MCF 10A (cell line): ENCODE measurements at regions of chr20 and their contacts with region 1.

Region 1: DNA sequence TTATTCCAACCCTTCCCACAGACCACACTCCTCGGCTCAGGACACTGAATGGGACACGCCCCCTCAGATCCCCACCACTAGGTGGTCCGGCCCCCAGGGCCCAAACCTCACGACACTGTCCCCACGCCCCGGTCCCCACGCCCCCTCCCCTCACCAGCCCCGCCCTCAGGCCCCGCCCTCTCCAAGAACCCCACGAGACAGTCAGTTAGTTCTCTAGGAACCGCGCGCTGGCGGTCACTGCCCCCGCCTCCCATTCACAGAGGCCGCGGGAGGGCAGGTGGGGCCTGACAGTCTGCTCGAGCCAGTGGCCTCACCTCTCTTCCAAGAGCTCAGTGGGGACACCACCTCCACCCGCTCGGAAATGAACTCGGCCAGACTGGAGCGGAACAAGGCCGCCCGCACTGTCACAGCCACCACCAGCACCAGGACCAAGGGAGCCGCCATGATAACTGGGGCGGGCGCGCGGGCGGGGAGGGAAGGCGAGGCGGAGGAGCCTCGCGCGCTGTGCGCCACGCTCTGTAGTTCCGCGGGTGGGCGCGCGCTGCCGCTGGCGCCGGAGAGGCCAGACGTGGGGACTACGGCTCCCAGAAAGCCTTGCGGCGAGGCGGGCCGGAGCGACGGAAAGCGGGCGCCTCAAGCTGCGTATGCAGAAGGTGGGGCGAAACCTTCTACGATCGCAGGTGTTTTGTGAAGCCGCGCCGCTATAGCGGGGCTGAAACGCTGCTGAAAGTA is at the start of gene PIGU:
- DNase-seq: peak; percentile 94
- H3K4me3 Mint-ChIP-seq: peak within 1 kb of the TSS; percentile 90
- H3K27ac Mint-ChIP-seq: peak within 1 kb of the TSS; percentile 95
- H3K4me1 Mint-ChIP-seq: peaks cover 6% of the 10 kb centered on the region
- H3K27me3 Mint-ChIP-seq: no peaks in the 10 kb centered on the region
- CTCF ChIP-seq: no peak
- total RNA-seq, gene PIGU: 14.2 and 14.5 TPM in 2 replicates

Region 2: GRCh38 chr20:34189572-34190163 is 487.1 kb before region 1 on chr20:
- CTCF ChIA-PET with region 1: no interaction called
- POLR2A ChIA-PET with region 1: no interaction called
- intact Hi-C with region 1: no loop called
- DNase-seq: no peak
- H3K4me3 Mint-ChIP-seq: no peak overlapping the region
- H3K27ac Mint-ChIP-seq: no peak overlapping the region
- H3K4me1 Mint-ChIP-seq: no peaks in the 10 kb centered on the region
- H3K27me3 Mint-ChIP-seq: peaks cover 39% of the 10 kb centered on the region
- CTCF ChIP-seq: no peak

Region 3: GRCh38 chr20:34689486-34689885 is 12.7 kb after region 1 on chr20:
- CTCF ChIA-PET with region 1: interaction called, 3 read pairs
- POLR2A ChIA-PET with region 1: interaction called, 12 read pairs
- intact Hi-C with region 1: no loop called
- DNase-seq: no peak
- H3K4me3 Mint-ChIP-seq: no peak overlapping the region
- H3K27ac Mint-ChIP-seq: no peak overlapping the region
- H3K4me1 Mint-ChIP-seq: no peaks in the 10 kb centered on the region
- H3K27me3 Mint-ChIP-seq: no peaks in the 10 kb centered on the region
- CTCF ChIP-seq: no peak

Region 4: DNA sequence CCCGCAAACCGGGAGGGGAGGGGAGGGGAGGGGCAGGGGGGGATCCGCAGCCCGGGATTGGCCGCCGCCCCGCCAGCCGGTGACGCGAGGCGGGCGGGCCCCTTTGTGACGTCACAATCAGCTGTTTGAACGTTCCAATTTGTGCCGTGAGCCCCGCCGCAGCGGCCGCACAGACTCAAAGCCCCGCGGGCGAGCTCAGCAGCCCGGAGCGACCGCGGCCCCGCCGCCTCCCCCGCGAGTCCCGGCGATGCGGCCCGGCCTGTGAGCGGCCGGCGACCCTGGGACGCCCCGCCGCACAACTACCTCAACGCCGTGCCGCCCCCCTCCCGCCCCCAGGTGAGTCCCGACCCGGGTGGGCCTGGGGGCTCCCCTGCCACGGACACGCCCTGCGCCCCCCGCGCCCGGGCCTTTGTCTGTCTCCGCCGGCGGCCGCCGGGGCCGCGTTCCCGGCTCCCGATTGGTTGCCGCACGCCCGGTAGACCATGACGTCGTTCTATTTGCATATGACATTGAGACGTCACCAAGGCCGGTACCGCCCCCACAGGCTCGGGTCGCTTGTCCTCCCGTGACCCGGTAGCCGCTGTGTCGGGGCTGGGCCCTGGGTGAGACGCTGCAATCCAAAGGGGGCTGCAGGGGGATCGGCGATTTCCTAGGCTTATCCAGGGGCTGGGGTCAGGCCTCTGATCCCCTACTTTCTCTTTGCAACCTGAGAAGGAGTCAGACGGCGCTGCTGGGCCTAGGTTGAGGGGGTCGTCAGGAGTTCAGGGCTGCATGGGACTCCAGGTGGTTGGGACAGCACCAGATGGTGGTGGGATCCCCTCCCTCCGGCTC is 27.6 kb after region 1 on chr20 and contains the start of gene TP53INP2:
- CTCF ChIA-PET with region 1: interaction called, 4 read pairs
- POLR2A ChIA-PET with region 1: interaction called, 44 read pairs
- intact Hi-C with region 1: loop called (anchors 2 kb)
- DNase-seq: peak; percentile 76
- H3K4me3 Mint-ChIP-seq: peak within 1 kb of the TSS; percentile 95
- H3K27ac Mint-ChIP-seq: peak within 1 kb of the TSS; percentile 77
- H3K4me1 Mint-ChIP-seq: peaks cover 8% of the 10 kb centered on the region
- H3K27me3 Mint-ChIP-seq: no peaks in the 10 kb centered on the region
- CTCF ChIP-seq: no peak
- total RNA-seq, gene TP53INP2: 1.8 and 3.6 TPM in 2 replicates